Breast epithelium (tissue), 4 donors: ENCODE measurements at regions of chr3 and their contacts with region 1.

Region 1: GRCh38 chr3:75140904-75141615 is 523.1 kb upstream of the FRG2C start:
- DNase-seq: no peak
- H3K4me3 ChIP-seq: no peak overlapping the region
- H3K27ac ChIP-seq: no peak overlapping the region
- H3K4me1 ChIP-seq: no peaks in the 10 kb centered on the region
- H3K27me3 ChIP-seq: no peaks in the 10 kb centered on the region
- CTCF ChIP-seq: no peak
- POLR2A ChIP-seq: no peak

Region 2: DNA sequence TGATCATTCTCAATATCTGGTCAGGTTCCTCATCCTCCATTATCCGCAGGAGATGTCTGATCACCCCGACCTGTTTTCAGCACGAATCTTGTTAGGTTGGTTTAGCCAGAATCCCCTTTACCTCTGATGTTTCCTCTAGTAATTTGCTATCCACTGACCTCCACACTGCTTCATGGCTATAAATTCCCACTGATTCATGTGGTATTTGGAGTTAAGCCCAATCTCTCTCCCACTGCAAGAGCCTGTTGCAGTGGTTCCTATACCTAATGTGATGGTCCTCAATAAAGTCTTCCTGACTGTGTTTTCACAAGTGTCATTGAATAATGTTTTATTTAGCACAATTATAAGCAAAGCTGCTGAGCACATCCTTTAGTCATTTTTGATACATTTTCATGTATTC is 401.8 kb before region 1 on chr3:
- intact Hi-C with region 1: loop called (anchors 5 kb)
- DNase-seq: no peak
- H3K4me3 ChIP-seq: no peak overlapping the region
- H3K27ac ChIP-seq: no peak overlapping the region
- H3K4me1 ChIP-seq: no peaks in the 10 kb centered on the region
- H3K27me3 ChIP-seq: no peaks in the 10 kb centered on the region
- CTCF ChIP-seq: no peak
- POLR2A ChIP-seq: no peak

Region 3: GRCh38 chr3:75089841-75090240 is 51.2 kb before region 1 on chr3:
- intact Hi-C with region 1: no loop called
- DNase-seq: no peak
- H3K4me3 ChIP-seq: no peak overlapping the region
- H3K27ac ChIP-seq: no peak overlapping the region
- H3K4me1 ChIP-seq: no peaks in the 10 kb centered on the region
- H3K27me3 ChIP-seq: no peaks in the 10 kb centered on the region
- CTCF ChIP-seq: no peak
- POLR2A ChIP-seq: no peak